ENCODE measurements at regions of chrX and their contacts with region 1.

Region 1: GRCh38 chrX:129833152-129833990 is 10.3 kb downstream of the ZDHHC9 start:
- DNase-seq: no peak
- H3K4me3 ChIP-seq: no peak overlapping the region
- H3K27ac ChIP-seq: no peak overlapping the region
- H3K4me1 ChIP-seq: no peaks in the 10 kb centered on the region
- H3K27me3 ChIP-seq: no peaks in the 10 kb centered on the region

Region 2: DNA sequence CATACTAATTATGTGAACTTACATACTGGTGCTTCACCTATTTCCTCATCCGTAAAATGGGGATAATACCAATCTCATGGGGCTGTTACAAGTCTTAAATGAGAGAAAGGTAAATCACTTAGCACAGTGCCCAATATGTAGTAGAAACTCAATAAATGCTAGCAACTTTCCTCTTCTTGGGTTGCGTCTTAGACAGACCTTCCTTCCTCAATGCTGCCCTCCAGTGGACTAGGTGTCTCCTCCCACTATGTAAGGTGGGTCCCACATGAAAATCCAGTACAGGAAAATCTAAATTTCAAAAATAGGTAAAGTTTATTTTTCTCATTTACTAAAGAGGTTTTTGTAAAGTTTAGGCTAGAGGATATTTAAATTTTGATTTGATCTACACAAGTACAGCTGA is 10.3 kb before region 1 on chrX:
- CTCF ChIA-PET with region 1: interaction called, 11 read pairs
- POLR2A ChIA-PET with region 1: interaction called, 5 read pairs
- DNase-seq: peak; percentile 55 to 75 (median 64)
- H3K4me3 ChIP-seq: no peak overlapping the region
- H3K27ac ChIP-seq: no peak overlapping the region
- H3K4me1 ChIP-seq: peaks cover 0 to 5% (median under 1%) of the 10 kb centered on the region in 4 experiments
- H3K27me3 ChIP-seq: no peaks in the 10 kb centered on the region